H1 (cell line): ENCODE measurements at regions of chrX and their contacts with region 1.

Region 1: DNA sequence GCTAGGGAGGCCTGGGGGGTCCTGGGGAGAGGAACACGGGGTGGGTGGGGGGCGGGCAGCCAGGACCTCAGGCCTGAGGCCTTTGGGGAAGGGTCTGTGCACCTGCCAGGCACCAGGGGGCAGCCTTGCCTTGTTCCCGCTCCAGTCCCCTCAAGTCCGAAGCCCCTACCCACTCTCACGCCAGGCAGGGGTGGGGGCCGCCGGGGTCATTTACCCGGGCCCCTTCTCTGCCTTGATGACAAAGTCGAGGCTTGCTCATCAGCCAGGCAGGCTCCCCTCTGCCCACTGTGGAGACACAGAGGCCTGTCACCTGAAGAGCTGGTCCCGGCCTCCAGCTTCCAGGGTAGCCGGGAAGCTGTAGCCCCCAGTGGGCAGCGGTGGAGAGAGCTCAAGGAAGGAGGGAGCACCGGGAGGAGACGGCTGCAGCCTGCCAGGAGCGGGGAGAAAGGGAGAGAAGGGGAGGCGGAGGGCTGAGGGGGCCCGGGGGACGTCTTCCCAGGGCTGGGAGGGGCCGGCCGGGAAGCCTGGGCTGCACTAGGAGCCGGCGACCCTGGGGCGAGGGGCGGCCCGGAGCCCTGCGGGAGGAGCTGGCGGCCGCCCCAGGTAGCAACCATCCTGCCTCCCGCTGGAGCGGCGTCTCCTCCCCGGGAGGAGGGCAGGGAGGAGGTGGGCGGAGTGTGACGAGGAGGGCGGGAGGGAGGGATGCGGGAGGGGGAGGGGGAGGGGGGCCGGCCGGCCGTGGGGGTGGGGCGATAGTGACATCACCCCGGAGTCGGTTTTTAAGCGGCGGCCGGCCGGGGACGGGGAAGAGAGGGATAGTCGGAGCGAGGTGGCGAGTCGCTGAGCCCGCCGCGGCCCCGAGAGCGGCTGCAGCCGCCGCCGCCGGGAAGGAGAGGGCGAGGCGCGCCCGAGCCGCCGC is at the start of gene SLC6A8:
- DNase-seq: peak in 1 of 2 experiments; percentile 69
- H3K4me3 ChIP-seq: peak within 1 kb of the TSS; percentile 47 to 58 (median 51)
- H3K27ac ChIP-seq: no peak within 1 kb of the TSS
- H3K4me1 ChIP-seq: peaks cover 0 to 27% (median 11%) of the 10 kb centered on the region in 4 experiments; a peak in 6 of 7 replicates
- H3K27me3 ChIP-seq: no peaks in the 10 kb centered on the region
- CTCF ChIP-seq: peak in 2 of 3 experiments; percentile 30 to 33; a peak in 3 of 4 replicates
- EP300 ChIP-seq: no peak
- POLR2A ChIP-seq: no peak; a peak in 1 of 3 replicates
- RAD21 ChIP-seq: peak; percentile 19 to 44; a peak in 3 of 4 replicates
- total RNA-seq, gene SLC6A8: 94.7 and 98.5 TPM in 2 replicates

Region 2: GRCh38 chrX:153703036-153703370 is 15.6 kb after region 1 on chrX:
- CTCF ChIA-PET with region 1: interaction called, 10 read pairs
- POLR2A ChIA-PET with region 1: interaction called, 6 read pairs
- DNase-seq: no peak
- H3K4me3 ChIP-seq: no peak overlapping the region
- H3K27ac ChIP-seq: no peak overlapping the region
- H3K4me1 ChIP-seq: no peaks in the 10 kb centered on the region; a peak in 1 of 7 replicates
- H3K27me3 ChIP-seq: no peaks in the 10 kb centered on the region
- CTCF ChIP-seq: no peak
- EP300 ChIP-seq: no peak
- POLR2A ChIP-seq: no peak
- RAD21 ChIP-seq: no peak

Region 3: GRCh38 chrX:153854702-153855101 is 167.3 kb after region 1 on chrX:
- CTCF ChIA-PET with region 1: no interaction called
- POLR2A ChIA-PET with region 1: no interaction called
- DNase-seq: no peak
- H3K4me3 ChIP-seq: no peak overlapping the region
- H3K27ac ChIP-seq: no peak overlapping the region
- H3K4me1 ChIP-seq: no peaks in the 10 kb centered on the region
- H3K27me3 ChIP-seq: no peaks in the 10 kb centered on the region; a peak in 1 of 7 replicates
- CTCF ChIP-seq: peak in 2 of 3 experiments; percentile 33 to 41; a peak in 3 of 4 replicates
- EP300 ChIP-seq: no peak
- POLR2A ChIP-seq: no peak
- RAD21 ChIP-seq: peak; percentile 17 to 40; a peak in 2 of 4 replicates